Activated B cell treated with CpG ODN at 0.5 μM for 24 hours (primary cell): ENCODE measurements at regions of chr2 and their contacts with region 1.

Region 1: DNA sequence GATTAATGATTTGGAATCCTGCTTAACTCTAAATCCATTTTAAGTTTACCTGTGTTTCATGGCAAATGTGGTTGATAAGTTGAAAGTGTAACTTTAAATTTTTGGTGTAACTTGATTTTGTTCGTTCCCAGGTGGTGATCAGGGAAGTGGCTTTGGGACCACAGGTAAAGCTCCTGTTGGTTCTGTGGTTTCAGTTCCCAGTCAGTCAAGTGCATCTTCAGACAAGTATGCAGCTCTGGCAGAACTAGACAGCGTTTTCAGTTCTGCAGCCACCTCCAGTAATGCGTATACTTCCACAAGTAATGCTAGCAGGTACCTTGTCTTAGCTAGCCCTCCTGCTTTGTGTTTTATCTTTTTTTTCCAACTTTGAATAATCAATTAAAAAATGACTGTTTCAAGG is 62.8 kb downstream of the AGFG1 start:
- DNase-seq: no peak
- ATAC-seq: no peak
- H3K4me3 Mint-ChIP-seq: no peak overlapping the region
- H3K27ac Mint-ChIP-seq: no peak overlapping the region
- H3K4me1 Mint-ChIP-seq: peaks cover 9% of the 10 kb centered on the region
- H3K27me3 Mint-ChIP-seq: no peaks in the 10 kb centered on the region
- CTCF ChIP-seq: no peak

Region 2: DNA sequence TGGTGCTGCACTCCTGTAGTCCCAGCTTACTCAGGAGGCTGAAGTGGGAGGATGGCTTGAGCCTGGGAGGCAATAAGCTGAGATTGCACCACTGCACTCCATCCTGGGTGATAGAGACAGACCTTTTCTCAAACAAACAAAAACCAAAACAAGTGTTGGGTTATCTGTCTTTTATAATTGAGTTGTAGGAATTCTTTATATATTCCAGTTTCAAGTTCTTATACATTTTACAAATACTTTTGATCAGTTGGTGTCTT is 15.8 kb before region 1 on chr2:
- CTCF ChIA-PET with region 1: no interaction called
- POLR2A ChIA-PET with region 1: no interaction called
- intact Hi-C with region 1: loop called (anchors 2 kb)
- DNase-seq: no peak
- ATAC-seq: no peak
- H3K4me3 Mint-ChIP-seq: no peak overlapping the region
- H3K27ac Mint-ChIP-seq: no peak overlapping the region
- H3K4me1 Mint-ChIP-seq: peaks cover 57% of the 10 kb centered on the region
- H3K27me3 Mint-ChIP-seq: no peaks in the 10 kb centered on the region
- CTCF ChIP-seq: no peak